A549 (cell line): ENCODE measurements at regions of chr9 and their contacts with region 1.

Region 1: DNA sequence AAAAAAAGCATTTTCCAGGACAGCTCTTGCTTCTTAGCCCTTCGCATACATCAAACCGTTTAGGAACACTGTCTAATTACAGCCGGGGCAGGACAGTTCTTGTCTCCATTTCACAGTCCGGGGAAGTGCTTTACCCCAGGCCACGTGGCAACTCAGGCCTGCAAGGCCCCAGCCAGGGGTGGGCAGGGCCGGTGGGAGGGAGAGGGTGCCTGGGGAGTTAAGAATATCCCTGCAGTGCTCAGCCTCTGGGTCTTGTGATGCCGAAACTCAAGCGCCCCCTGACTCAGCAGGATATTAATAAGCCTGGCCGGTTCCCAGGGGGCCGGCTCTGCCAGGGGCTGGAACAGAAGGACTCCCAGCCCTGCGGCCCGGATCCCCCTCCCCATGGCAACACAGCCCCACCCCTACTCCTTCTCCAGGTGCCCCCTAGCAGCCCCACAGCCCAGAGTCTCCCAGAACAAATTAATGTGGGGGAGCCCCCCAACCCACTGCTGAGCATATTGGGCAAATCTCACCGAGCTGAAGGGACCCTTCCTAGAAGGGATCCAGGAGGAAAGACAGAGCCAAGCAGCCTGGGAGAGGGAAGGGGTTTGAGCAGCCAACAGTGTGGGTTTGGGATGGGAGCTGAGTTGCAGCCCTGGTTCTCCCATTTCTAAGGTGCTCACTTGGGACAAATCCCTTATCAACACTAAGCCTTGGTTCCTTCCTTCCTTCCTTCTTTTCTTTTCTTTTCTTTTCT is 45.3 kb downstream of the PLPP7 start:
- DNase-seq: no peak
- ATAC-seq: peak in 1 of 2 experiments; percentile 14; a peak in 1 of 6 replicates
- H3K4me3 ChIP-seq: no peak overlapping the region
- H3K27ac ChIP-seq: peak overlapping the region in 1 of 2 experiments; percentile 48; a peak in 1 of 6 replicates
- H3K4me1 ChIP-seq: no peaks in the 10 kb centered on the region
- CTCF ChIP-seq: no peak
- EP300 ChIP-seq: no peak
- POLR2A ChIP-seq: no peak
- RAD21 ChIP-seq: no peak

Region 2: GRCh38 chr9:131125128-131126058 is 209.4 kb before region 1 on chr9 and contains the start of gene NUP214:
- CTCF ChIA-PET with region 1: interaction called, 11 read pairs
- POLR2A ChIA-PET with region 1: no interaction called
- DNase-seq: peak; percentile 96 to 98
- ATAC-seq: peak; percentile 99 to 100
- H3K4me3 ChIP-seq: peak within 1 kb of the TSS; percentile 88
- H3K27ac ChIP-seq: peak within 1 kb of the TSS; percentile 81 to 90
- H3K4me1 ChIP-seq: peaks cover 6% of the 10 kb centered on the region; the same call in 2 of the 3 replicates
- CTCF ChIP-seq: no peak
- EP300 ChIP-seq: no peak
- POLR2A ChIP-seq: peak; percentile 87
- RAD21 ChIP-seq: no peak
- polyA plus RNA-seq, gene NUP214: 14.4 and 25.8 TPM in 2 replicates

Region 3: GRCh38 chr9:131214286-131214856 is 120.4 kb before region 1 on chr9:
- CTCF ChIA-PET with region 1: interaction called, 12 read pairs
- POLR2A ChIA-PET with region 1: no interaction called
- DNase-seq: no peak
- ATAC-seq: no peak
- H3K4me3 ChIP-seq: no peak overlapping the region
- H3K27ac ChIP-seq: no peak overlapping the region
- H3K4me1 ChIP-seq: no peaks in the 10 kb centered on the region
- CTCF ChIP-seq: no peak
- EP300 ChIP-seq: no peak
- POLR2A ChIP-seq: no peak
- RAD21 ChIP-seq: no peak

Region 4: DNA sequence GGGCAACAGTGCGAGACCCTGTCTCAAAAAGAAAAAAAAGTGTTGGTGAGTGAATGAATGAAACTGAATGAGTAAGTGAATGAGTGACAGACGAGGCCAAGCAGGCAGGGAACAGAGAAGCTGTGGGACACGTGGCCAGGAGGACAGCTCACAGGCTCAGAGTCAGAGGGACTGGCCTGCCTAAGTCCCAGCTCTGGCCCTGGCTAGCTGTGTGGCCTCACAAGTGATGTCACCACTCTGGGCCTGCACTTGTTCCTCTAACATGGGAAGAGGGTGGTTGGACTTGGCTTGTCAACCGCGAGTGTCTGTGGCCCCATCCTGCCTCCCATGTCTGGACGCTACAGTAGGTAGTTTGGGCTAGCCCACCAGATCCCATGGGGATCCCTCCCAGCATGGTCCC is 49.9 kb before region 1 on chr9:
- CTCF ChIA-PET with region 1: interaction called, 14 read pairs
- POLR2A ChIA-PET with region 1: no interaction called
- DNase-seq: no peak
- ATAC-seq: no peak
- H3K4me3 ChIP-seq: no peak overlapping the region
- H3K27ac ChIP-seq: no peak overlapping the region
- H3K4me1 ChIP-seq: no peaks in the 10 kb centered on the region
- CTCF ChIP-seq: no peak
- EP300 ChIP-seq: no peak
- POLR2A ChIP-seq: no peak
- RAD21 ChIP-seq: no peak

Region 5: GRCh38 chr9:131310833-131311554 is 23.8 kb before region 1 on chr9:
- CTCF ChIA-PET with region 1: interaction called, 25 read pairs
- POLR2A ChIA-PET with region 1: no interaction called
- DNase-seq: peak; percentile 25 to 38
- ATAC-seq: peak; percentile 64 to 66; a peak in 5 of 6 replicates
- H3K4me3 ChIP-seq: no peak overlapping the region
- H3K27ac ChIP-seq: 0 out of 6 replicates have a peak overlapping the region, but pooled peaks of 1 of the 2 experiments have one; percentile 19
- H3K4me1 ChIP-seq: no peaks in the 10 kb centered on the region
- CTCF ChIP-seq: no peak
- EP300 ChIP-seq: no peak
- POLR2A ChIP-seq: no peak
- RAD21 ChIP-seq: no peak

Region 6: DNA sequence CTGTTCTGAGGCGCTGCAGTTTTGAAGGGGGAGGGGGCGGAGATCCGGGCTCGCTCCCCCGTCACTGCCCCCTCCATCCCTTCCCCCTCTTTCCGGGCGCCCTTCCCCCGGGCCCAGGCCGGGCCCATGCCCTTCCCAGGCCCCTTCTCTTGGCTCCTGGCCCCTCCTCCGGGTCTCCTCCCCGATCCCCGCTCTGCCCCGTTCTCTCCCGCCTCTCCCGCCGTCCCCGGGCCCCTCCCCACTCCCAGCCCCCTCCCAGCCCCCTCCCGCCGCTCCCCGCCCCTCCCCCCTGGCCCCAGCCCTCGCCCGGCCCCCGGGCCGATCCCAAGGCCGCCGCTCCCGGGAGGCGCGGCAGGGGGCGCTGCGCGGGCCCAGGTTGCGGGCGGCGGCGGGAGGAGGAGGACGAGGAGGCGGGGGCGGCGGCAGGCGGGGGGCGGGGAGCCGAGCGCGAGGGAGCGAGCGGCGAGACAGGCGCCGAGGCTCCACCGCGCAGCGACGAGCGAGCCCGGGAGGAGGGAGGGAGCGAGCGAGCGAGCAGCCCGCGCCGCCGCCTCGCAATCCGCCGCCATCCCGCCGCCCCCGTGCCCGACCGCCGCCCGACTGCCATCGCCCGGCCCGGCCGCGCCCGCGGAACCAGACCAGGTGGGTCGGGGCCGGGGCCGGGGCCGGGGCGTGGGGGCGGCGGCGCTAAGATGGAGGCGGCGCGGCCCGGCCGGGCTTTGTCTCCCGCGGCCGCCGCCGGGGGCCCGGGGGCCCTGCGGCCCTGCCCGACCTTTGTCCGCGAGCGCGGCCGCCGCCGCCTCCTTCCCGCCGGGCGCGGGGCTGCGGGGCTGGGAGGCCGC is 59.0 kb after region 1 on chr9 and contains the start of gene PRRC2B:
- CTCF ChIA-PET with region 1: no interaction called
- POLR2A ChIA-PET with region 1: no interaction called
- DNase-seq: peak; percentile 86 to 88
- ATAC-seq: peak; percentile 80 to 89
- H3K4me3 ChIP-seq: peak within 1 kb of the TSS; percentile 61
- H3K27ac ChIP-seq: peak within 1 kb of the TSS; percentile 85 to 99
- H3K4me1 ChIP-seq: peaks cover 45% of the 10 kb centered on the region
- CTCF ChIP-seq: peak; percentile 90
- EP300 ChIP-seq: no peak; a peak in 2 of 5 replicates
- POLR2A ChIP-seq: peak; percentile 90
- RAD21 ChIP-seq: peak; percentile 18 to 70; a peak in 3 of 5 replicates
- polyA plus RNA-seq, gene PRRC2B: 35.6 and 57.0 TPM in 2 replicates